ENCODE measurements at regions of chr15 and their contacts with region 1.

Region 1: DNA sequence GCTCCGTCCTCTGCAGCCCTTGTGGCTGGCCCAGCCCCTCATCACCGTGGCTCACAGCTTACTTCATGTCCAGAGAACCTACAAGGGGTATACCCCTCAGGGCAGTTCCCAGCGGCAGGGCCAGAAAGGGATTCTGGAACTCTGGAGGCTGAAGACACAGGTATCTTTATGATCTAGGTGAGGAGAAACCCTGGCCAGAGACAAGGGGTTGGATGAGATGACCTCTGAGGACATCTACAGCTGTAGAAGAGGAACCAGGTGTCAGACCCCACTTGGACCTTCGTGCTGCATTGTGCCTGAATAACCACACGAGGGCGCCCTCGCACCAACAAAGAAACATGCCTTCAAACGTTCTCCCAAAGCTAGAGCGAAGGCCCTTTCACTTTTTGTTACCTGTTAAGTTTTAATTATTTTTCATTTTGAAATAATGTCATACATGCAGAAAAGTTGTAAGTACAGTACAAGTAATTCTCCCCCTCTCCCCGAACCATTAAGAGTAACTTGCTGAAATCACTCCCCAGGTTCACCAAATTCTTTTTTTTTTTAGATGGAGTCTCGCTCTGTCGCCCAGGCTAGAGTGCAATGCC is 118.7 kb upstream of the SMAD3 start:
- ATAC-seq: peak; percentile 60 to 90 (median 70)
- H3K4me3 ChIP-seq: no peak overlapping the region
- H3K27ac ChIP-seq: no peak overlapping the region
- H3K4me1 ChIP-seq: no peaks in the 10 kb centered on the region

Region 2: DNA sequence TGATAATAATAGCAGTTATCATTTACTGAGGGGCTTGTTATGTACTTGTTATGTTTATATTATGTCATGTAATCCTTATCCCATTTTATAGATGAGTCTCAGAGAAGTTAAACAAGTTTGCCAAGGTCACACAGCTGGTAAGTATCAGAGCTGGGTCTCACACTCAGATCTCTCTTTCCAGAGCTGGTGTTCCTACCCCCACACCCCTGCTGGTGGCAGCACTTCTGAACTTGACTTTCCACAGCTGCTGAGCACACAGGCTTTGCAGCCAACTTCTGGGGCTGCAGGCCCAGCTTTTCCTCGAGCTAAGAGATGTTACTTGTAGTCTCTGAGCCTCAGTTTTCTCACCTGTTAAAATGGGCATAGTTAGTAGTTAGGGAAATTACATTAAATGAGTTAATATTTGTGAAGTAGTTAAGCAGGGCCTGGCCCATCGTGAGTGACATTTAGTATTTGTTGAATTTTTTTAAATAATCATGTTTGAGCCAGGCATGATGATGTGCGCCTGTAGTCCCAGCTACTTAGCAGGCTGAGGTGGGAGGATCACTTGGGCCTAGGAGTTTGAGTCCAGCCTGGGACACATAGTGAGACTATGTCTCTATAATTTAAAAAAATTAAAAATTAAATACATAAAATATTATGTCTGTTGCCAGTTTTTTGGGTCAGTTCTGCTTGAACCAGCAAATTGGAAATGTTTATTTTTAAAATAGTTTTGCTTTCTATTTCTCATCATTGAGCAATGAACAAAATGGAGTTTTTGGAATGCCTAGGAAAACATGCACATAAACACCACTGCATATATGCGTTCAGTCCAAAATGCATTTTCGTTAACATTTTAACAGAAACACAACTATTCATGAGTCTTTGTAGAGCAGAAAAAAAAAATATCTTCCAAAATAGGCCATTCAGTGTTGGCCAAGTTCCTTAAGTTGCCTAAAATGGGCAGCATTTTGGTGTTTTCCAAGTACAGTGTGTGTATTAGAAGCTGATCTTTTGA is 157.3 kb before region 1 on chr15:
- in situ Hi-C with region 1: no loop called
- ATAC-seq: peak in 5 of 8 experiments; percentile 48 to 89 (median 87)
- H3K4me3 ChIP-seq: no peak overlapping the region
- H3K27ac ChIP-seq: no peak overlapping the region
- H3K4me1 ChIP-seq: peaks cover 0 to 6% of the 10 kb centered on the region in 2 donors

Region 3: GRCh38 chr15:67178569-67179210 is 232.0 kb after region 1 on chr15:
- in situ Hi-C with region 1: no loop called
- ATAC-seq: peak in 3 of 8 experiments; percentile 15 to 28 (median 26)
- H3K4me3 ChIP-seq: no peak overlapping the region
- H3K27ac ChIP-seq: no peak overlapping the region
- H3K4me1 ChIP-seq: no peaks in the 10 kb centered on the region

Region 4: GRCh38 chr15:67303490-67304363 is 357.1 kb after region 1 on chr15:
- in situ Hi-C with region 1: loop called in 1 of 9 experiments (anchors 25 kb)
- ATAC-seq: peak in 1 of 8 experiments; percentile 30
- H3K4me3 ChIP-seq: no peak overlapping the region
- H3K27ac ChIP-seq: no peak overlapping the region
- H3K4me1 ChIP-seq: peaks cover 0 to 5% of the 10 kb centered on the region in 2 donors

Region 5: DNA sequence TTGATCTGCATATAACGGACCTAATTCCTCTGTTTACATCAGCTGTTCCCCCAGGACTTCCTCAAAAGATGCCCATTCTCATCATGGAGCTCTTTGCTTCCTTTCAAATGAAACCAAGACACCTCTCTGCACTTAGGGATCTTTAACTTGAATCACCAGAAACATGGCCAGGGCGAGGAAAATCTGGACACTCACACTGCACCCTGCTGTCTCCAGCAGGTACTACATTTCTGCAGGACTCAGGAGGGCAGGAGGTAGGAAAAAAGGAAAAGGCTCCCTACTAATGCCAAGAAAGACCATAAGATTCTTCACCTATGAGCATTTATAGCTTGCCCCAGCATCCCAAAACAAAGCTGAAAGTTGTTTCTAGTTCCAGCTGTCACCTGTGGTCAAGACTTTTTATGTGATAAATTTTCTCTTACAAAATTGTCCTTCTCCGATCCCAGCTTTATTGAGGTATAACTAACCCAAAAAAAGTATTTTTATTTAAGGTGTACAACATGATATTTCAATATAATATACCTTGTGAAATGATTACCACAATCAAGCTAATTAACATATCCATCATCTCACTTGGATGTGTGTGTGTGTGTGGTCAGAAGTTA is 486.9 kb after region 1 on chr15:
- in situ Hi-C with region 1: loop called in 2 of 9 experiments (anchors 25 kb)
- ATAC-seq: peak in 3 of 8 experiments; percentile 74 to 87 (median 84)
- H3K4me3 ChIP-seq: no peak overlapping the region
- H3K27ac ChIP-seq: no peak overlapping the region
- H3K4me1 ChIP-seq: no peaks in the 10 kb centered on the region